Activated naive CD4-positive, alpha-beta T cell treated with anti-CD3 and anti-CD28 coated beads for 36 hours (primary cell): ENCODE measurements at regions of chr3 and their contacts with region 1.

Region 1: DNA sequence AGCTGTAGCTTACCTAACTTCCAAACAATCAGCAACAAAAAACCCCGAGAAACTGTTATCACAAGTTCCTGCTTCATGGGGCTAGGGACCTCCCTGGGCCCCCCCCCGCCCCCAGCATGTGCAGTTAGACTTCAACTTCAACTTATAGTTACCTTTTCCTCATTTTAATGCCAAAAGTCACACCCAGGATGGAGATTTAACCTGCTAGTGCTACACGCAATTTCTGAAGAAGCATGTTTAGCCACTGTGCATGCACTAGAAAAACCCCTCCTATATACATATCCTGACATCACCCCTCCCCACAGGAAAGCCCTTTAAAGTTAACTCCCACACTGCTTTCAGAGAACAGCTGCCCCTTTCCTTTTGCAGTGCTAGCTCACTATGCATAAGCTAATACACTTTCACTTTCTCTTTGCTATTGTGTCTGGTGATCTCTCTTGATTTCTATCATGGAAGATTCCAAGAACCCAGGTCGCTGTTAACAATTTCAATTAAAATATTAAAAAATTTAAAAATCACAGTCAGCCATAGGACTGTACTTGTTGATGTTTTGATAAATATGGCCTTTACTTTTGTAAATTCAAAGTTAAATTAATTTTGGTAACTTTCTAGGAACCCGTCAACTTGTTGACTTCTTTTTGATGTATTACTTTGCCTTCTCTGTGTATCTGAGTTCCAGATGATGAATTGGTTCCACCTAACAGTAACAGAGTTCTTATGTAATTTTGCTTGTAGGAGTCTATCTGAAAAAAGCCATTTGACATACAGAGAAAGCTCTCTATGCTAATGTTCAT is 75.2 kb upstream of the ACAD9 start:
- DNase-seq: peak; percentile 86
- H3K4me3 Mint-ChIP-seq: peak overlapping the region; percentile 45
- H3K27ac Mint-ChIP-seq: peak overlapping the region; percentile 96
- H3K4me1 Mint-ChIP-seq: peaks cover 87% of the 10 kb centered on the region
- H3K27me3 Mint-ChIP-seq: no peaks in the 10 kb centered on the region

Region 2: DNA sequence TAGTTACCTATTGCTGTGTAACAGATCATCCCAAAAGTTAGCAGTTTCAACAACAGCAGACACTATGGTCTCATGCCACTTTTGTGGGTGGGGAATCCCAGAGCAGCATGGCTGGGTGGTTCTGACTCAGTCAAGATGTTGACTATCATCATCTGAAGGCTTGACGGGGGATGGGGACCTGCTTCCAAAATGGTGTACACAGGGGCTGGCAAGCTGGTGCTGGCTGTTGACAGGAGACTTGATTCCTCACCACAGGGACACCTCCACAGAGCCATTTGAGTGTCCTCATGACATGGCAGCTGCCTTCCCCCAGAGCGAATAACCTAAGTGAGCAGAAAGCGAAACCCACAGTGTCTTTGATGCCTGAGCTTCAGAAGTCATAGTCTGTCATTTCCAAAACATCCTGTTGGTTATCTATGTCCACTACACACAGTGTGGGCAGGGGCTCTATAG is 356.6 kb before region 1 on chr3:
- CTCF ChIA-PET with region 1: no interaction called
- intact Hi-C with region 1: loop called (anchors 2 kb)
- DNase-seq: peak; percentile 95
- H3K4me3 Mint-ChIP-seq: no peak overlapping the region
- H3K27ac Mint-ChIP-seq: peak overlapping the region; percentile 95
- H3K4me1 Mint-ChIP-seq: peaks cover 33% of the 10 kb centered on the region
- H3K27me3 Mint-ChIP-seq: peaks cover 2% of the 10 kb centered on the region

Region 3: DNA sequence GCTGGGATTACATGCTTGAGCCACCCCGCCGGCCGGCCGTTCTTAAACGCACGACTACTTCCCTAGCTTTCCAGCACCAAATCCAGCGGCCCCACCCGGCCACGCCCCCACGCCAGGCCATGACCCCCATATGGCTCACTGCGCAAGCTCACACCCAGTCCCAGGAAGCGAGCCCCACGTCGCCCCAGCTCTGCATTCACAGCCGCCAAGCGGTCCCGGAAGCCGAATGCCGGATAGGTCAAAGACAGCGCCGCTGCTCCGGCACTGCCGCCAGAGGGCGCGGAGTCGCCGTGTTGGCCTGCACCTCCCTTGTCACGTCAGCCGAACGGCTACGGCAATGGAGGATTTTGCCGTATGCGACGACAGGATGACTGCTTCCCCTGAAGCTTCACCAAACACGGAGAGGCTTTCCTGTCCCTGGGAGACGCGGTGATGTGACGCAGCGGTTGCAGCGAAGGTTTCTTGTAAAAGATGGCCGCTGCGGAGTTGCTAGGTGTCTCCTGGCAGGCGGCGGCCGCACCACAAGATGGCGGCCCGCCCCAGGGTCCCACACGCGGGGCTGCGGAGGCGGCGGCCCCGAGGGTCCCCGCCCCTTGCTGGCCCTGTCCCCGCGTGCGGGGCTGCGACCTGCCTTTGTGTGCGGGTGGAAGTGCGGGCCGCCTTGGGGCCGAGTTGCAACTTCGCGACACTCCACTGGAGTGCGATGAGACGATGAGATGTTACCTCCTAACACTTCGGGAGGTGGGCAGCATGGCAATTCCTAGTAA is 123.4 kb before region 1 on chr3:
- CTCF ChIA-PET with region 1: interaction called, 101 read pairs
- intact Hi-C with region 1: loop called (anchors 1 kb)
- DNase-seq: peak; percentile 98
- H3K4me3 Mint-ChIP-seq: peak overlapping the region; percentile 86
- H3K27ac Mint-ChIP-seq: peak overlapping the region; percentile 99
- H3K4me1 Mint-ChIP-seq: peaks cover 23% of the 10 kb centered on the region
- H3K27me3 Mint-ChIP-seq: no peaks in the 10 kb centered on the region

Region 4: DNA sequence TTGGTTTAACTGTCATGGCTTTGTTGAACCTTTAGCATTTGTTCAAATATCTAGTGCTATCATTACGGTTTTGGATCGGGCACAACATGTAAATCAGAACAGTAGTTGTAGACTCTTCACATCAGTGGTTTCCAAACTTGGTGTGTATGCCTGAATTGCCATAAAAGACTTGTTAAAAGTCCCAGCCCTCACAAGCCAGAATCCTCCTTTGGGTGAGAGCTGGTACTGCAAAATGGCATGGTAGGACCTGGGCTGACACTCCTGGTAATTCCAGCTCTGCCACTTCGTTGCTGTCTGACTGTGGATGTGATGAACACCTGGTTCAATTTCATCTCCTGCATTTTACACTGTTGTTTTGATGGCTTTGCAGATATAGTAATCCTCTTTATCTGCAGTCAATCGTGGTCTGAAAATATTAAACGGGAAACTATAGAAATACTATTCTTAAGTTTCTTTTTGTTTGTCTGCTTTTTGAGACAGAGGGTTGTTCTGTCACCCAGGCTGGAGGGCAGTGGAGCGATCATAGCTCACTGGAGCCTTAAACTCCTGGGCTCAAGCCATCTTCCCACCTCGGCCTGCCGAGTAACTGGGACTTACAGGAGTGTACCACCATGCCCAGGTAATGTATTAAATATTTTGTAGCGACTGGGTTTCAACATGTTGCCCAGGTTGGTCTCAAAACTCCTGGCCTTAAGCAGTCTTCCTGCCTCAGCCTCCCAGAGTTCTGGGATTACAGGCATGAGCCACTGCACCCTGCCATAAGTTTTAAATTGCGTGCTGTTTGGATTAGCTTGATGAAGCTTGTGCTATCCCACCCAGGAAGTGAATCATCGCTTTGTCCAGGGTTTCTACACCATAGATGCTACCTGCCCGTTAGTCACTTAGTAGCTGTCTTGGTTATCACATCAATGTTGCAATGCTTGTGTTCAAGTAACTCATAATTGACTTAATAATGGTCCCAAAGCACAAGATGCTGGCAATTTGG is 16.7 kb before region 1 on chr3:
- CTCF ChIA-PET with region 1: interaction called, 68 read pairs
- intact Hi-C with region 1: loop called (anchors 1 kb)
- DNase-seq: peak; percentile 69
- H3K4me3 Mint-ChIP-seq: peak overlapping the region; percentile 76
- H3K27ac Mint-ChIP-seq: peak overlapping the region; percentile 99
- H3K4me1 Mint-ChIP-seq: peaks cover 98% of the 10 kb centered on the region
- H3K27me3 Mint-ChIP-seq: no peaks in the 10 kb centered on the region

Region 5: DNA sequence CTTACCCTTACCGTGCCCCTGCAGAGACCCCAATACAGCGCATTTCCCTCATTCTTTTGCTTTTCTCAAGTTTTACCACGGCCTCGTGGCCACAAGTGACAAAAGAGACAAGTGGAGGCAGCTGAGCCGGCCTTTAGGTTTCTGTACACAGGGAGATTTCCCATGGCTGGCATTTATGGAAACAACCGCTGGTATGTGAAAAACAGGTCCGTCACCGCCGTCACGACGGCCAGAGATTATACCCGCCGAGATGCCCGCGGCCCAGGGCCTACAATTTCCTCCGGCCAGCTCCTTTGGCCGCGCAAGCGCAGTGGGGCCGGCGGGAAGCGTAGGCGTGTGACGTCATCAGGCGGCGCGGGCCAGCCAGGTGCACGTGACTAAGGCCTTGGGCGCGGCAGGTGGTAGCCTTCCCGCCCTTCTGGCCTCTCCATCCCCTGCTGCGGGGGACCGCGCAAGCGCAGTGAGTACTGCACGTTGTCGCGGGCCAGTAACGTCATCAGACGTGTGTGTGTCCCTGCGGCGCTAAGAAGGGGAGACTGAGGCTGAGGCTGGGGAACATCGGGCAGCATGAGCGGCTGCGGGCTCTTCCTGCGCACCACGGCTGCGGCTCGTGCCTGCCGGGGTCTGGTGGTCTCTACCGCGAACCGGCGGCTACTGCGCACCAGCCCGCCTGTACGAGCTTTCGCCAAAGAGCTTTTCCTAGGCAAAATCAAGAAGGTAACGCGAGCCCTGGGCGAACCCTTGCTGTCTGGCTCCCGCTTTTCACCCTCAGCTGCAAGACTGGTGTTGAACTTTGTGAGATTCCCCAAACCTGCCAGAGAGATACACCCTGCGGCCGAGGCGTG is 75.1 kb after region 1 on chr3 and contains the start of gene ACAD9:
- CTCF ChIA-PET with region 1: interaction called, 5 read pairs
- intact Hi-C with region 1: loop called (anchors 1 kb)
- DNase-seq: peak; percentile 96
- H3K4me3 Mint-ChIP-seq: peak within 1 kb of the TSS; percentile 84
- H3K27ac Mint-ChIP-seq: peak within 1 kb of the TSS; percentile 90
- H3K4me1 Mint-ChIP-seq: peaks cover 67% of the 10 kb centered on the region
- H3K27me3 Mint-ChIP-seq: no peaks in the 10 kb centered on the region
- total RNA-seq, gene ACAD9: 37.0 to 40.6 TPM

Region 6: GRCh38 chr3:129120254-129121004 is 316.2 kb after region 1 on chr3:
- CTCF ChIA-PET with region 1: no interaction called
- intact Hi-C with region 1: loop called (anchors 1 kb)
- DNase-seq: peak; percentile 98
- H3K4me3 Mint-ChIP-seq: peak overlapping the region; percentile 94
- H3K27ac Mint-ChIP-seq: peak overlapping the region; percentile 99
- H3K4me1 Mint-ChIP-seq: peaks cover 46% of the 10 kb centered on the region
- H3K27me3 Mint-ChIP-seq: no peaks in the 10 kb centered on the region

Region 7: GRCh38 chr3:129278439-129278970 is 474.3 kb after region 1 on chr3 and contains the start of gene HMCES:
- CTCF ChIA-PET with region 1: no interaction called
- intact Hi-C with region 1: loop called (anchors 5 kb)
- DNase-seq: peak; percentile 96
- H3K4me3 Mint-ChIP-seq: peak within 1 kb of the TSS; percentile 87
- H3K27ac Mint-ChIP-seq: peak within 1 kb of the TSS; percentile 90
- H3K4me1 Mint-ChIP-seq: peaks cover 48% of the 10 kb centered on the region
- H3K27me3 Mint-ChIP-seq: no peaks in the 10 kb centered on the region
- total RNA-seq, gene HMCES: 35.0 to 35.8 TPM